ENCODE measurements at regions of chr2 and their contacts with region 1.

Region 1: GRCh38 chr2:75403991-75404428 is 156.7 kb downstream of the EVA1A start:
- DNase-seq: no peak
- H3K4me3 ChIP-seq: no peak overlapping the region
- H3K27ac ChIP-seq: no peak overlapping the region
- H3K4me1 ChIP-seq: peaks cover 0 to 6% (median 0%) of the 10 kb centered on the region in 6 donors
- H3K27me3 ChIP-seq: no peaks in the 10 kb centered on the region
- CTCF ChIP-seq: peak; percentile 32 to 77 (median 66)
- POLR2A ChIP-seq: no peak

Region 2: GRCh38 chr2:74919827-74920226 is 484.2 kb before region 1 on chr2:
- intact Hi-C with region 1: loop called (anchors 2 kb)
- DNase-seq: peak; percentile 93
- H3K4me3 ChIP-seq: peak overlapping the region in 4 of 8 donors; percentile 9 to 59 (median 34)
- H3K27ac ChIP-seq: no peak overlapping the region
- H3K4me1 ChIP-seq: peaks cover 0 to 31% (median 22%) of the 10 kb centered on the region in 6 donors
- H3K27me3 ChIP-seq: peaks cover 0 to 52% (median 3%) of the 10 kb centered on the region in 7 donors
- CTCF ChIP-seq: peak; percentile 65 to 93 (median 88)
- POLR2A ChIP-seq: no peak

Region 3: GRCh38 chr2:74975016-74975415 is 429.0 kb before region 1 on chr2:
- intact Hi-C with region 1: no loop called
- DNase-seq: no peak
- H3K4me3 ChIP-seq: no peak overlapping the region
- H3K27ac ChIP-seq: no peak overlapping the region
- H3K4me1 ChIP-seq: peaks cover 0 to 6% (median 3%) of the 10 kb centered on the region in 6 donors
- H3K27me3 ChIP-seq: no peaks in the 10 kb centered on the region
- CTCF ChIP-seq: no peak
- POLR2A ChIP-seq: no peak

Region 4: DNA sequence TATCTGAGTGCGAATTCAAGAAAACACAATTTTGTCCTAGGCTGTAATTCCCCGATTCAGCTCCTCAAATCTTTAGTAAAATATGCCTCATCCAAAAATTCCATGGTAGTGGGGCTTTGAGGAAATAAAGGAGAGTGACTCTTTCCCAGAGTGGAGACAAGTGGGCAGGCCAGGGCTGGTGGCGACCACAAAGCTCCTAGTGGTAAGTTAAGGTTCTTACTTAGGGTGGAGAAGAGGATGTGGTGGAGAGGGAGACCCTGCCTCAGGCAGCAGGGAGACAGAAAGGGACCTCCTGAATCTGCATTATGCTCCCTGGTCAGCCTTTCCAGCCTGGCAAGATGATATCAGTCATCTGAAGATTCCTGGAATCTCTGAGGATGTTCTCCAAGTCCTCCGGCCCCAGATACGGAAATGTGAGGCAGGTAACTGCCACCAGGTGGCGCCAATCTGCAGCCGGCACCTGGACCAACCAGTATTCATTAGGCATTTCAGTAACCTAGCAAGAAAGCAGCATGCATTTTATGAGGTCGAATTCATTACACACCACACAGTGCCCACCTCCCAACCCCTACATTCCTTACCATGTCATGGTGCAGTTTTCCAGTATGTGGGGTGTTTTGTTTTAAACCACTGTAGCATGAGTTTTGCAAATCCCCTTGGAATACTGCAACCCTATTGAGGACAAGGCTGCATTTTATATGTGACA is 339.2 kb before region 1 on chr2:
- intact Hi-C with region 1: loop called (anchors 10 kb)
- DNase-seq: peak; percentile 84
- H3K4me3 ChIP-seq: no peak overlapping the region
- H3K27ac ChIP-seq: no peak overlapping the region
- H3K4me1 ChIP-seq: no peaks in the 10 kb centered on the region
- H3K27me3 ChIP-seq: no peaks in the 10 kb centered on the region
- CTCF ChIP-seq: peak; percentile 24 to 88 (median 58)
- POLR2A ChIP-seq: no peak

Region 5: GRCh38 chr2:75199428-75200011 is 204.5 kb before region 1 on chr2 and contains the start of gene TACR1:
- intact Hi-C with region 1: loop called (anchors 10 kb)
- DNase-seq: peak; percentile 87
- H3K4me3 ChIP-seq: peak within 1 kb of the TSS; percentile 25 to 61 (median 32)
- H3K27ac ChIP-seq: no peak within 1 kb of the TSS
- H3K4me1 ChIP-seq: peaks cover 13 to 28% (median 21%) of the 10 kb centered on the region in 6 donors
- H3K27me3 ChIP-seq: peaks cover 0 to 78% (median 42%) of the 10 kb centered on the region in 7 donors
- CTCF ChIP-seq: peak in 9 of 11 experiments; percentile 8 to 73 (median 57)
- POLR2A ChIP-seq: no peak
- total RNA-seq, gene TACR1: 0.13 to 0.28 (median 0.16) TPM in 4 of 7 donors, not detected in the others

Measured in spleen (tissue), 13 donors.